ENCODE measurements at regions of chr18 and their contacts with region 1.

Region 1: DNA sequence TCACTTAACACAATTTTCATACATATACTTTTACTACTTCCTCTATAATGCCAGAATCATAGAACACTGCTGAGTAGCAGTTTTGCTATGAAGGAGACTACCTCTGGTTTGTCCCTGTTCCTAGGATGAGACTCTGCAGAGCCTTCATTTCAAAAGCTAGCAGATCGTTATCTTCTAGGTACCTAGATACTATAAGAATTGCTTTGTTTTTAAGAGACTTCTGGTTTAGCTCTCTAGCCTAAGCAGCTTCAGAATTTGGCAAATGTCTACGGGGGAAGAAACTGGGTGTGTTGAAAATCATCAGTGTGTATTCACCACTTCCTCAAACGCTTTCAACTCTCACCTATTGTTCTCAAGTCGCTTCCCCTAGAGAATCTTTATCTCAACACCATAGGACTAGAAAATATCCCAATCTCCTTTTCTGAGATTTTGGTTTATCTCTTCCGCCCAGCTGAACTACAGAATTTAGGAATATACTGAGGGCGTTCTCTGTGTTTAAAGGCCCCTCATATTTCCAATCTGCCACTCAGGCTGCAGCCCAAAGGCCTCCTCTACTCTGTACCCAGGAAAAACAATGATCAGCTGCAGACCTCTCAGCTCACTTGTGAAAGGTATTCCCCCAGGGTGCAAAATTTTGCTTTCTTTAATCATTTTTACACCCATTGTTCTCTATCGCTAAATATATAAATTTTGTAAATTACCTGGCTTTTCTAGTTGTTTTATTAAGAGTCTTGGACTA is 28.7 kb downstream of the SMAD2 start:
- DNase-seq: peak in 7 of 9 donors; percentile 57 to 80 (median 71)
- ATAC-seq: peak; percentile 95
- H3K4me3 ChIP-seq: peak overlapping the region; percentile 35
- H3K4me3 Mint-ChIP-seq: peak overlapping the region; percentile 58 to 78 (median 71)
- H3K27ac ChIP-seq: peak overlapping the region; percentile 54
- H3K27ac Mint-ChIP-seq: peak overlapping the region; percentile 80 to 92 (median 88)
- H3K4me1 ChIP-seq: peaks cover 19 to 36% of the 10 kb centered on the region in 2 donors
- H3K4me1 Mint-ChIP-seq: peaks cover 51 to 94% (median 87%) of the 10 kb centered on the region in 7 donors
- H3K27me3 ChIP-seq: no peaks in the 10 kb centered on the region
- H3K27me3 Mint-ChIP-seq: no peaks in the 10 kb centered on the region

Region 2: GRCh38 chr18:47912343-47912742 is 10.6 kb after region 1 on chr18:
- CTCF ChIA-PET with region 1: no interaction called
- POLR2A ChIA-PET with region 1: interaction called, 3 read pairs
- intact Hi-C with region 1: loop called (anchors 1 kb)
- DNase-seq: no peak
- ATAC-seq: peak; percentile 36
- H3K4me3 ChIP-seq: no peak overlapping the region
- H3K4me3 Mint-ChIP-seq: peak overlapping the region in 9 of 10 donors; percentile 32 to 71 (median 63)
- H3K27ac ChIP-seq: peak overlapping the region; percentile 67
- H3K27ac Mint-ChIP-seq: peak overlapping the region; percentile 17 to 89 (median 72)
- H3K4me1 ChIP-seq: peaks cover 13 to 33% of the 10 kb centered on the region in 2 donors
- H3K4me1 Mint-ChIP-seq: peaks cover 48 to 98% (median 90%) of the 10 kb centered on the region in 7 donors
- H3K27me3 ChIP-seq: no peaks in the 10 kb centered on the region
- H3K27me3 Mint-ChIP-seq: no peaks in the 10 kb centered on the region

Region 3: GRCh38 chr18:47917923-47918610 is 16.3 kb after region 1 on chr18:
- CTCF ChIA-PET with region 1: no interaction called
- POLR2A ChIA-PET with region 1: interaction called, 5 read pairs
- intact Hi-C with region 1: loop called in 1 of 2 experiments (anchors 1 kb)
- DNase-seq: no peak
- ATAC-seq: peak; percentile 51
- H3K4me3 ChIP-seq: no peak overlapping the region
- H3K4me3 Mint-ChIP-seq: peak overlapping the region in 9 of 10 donors; percentile 3 to 72 (median 37)
- H3K27ac ChIP-seq: peak overlapping the region; percentile 47
- H3K27ac Mint-ChIP-seq: peak overlapping the region; percentile 67 to 91 (median 82)
- H3K4me1 ChIP-seq: peaks cover 10 to 29% of the 10 kb centered on the region in 2 donors
- H3K4me1 Mint-ChIP-seq: peaks cover 43 to 99% (median 92%) of the 10 kb centered on the region in 7 donors
- H3K27me3 ChIP-seq: no peaks in the 10 kb centered on the region
- H3K27me3 Mint-ChIP-seq: no peaks in the 10 kb centered on the region